Activated naive CD4-positive, alpha-beta T cell treated with anti-CD3 and anti-CD28 coated beads for 36 hours (primary cell): ENCODE measurements at regions of chr18 and their contacts with region 1.

Region 1: GRCh38 chr18:58649966-58650816 is 21.1 kb upstream of the MALT1 start:
- DNase-seq: peak; percentile 78
- H3K4me3 Mint-ChIP-seq: no peak overlapping the region
- H3K27ac Mint-ChIP-seq: no peak overlapping the region
- H3K4me1 Mint-ChIP-seq: peaks cover 59% of the 10 kb centered on the region
- H3K27me3 Mint-ChIP-seq: no peaks in the 10 kb centered on the region

Region 2: GRCh38 chr18:58552057-58552461 is 98.1 kb before region 1 on chr18:
- CTCF ChIA-PET with region 1: no interaction called
- intact Hi-C with region 1: loop called (anchors 1 kb)
- DNase-seq: peak; percentile 73
- H3K4me3 Mint-ChIP-seq: no peak overlapping the region
- H3K27ac Mint-ChIP-seq: peak overlapping the region; percentile 68
- H3K4me1 Mint-ChIP-seq: peaks cover 51% of the 10 kb centered on the region
- H3K27me3 Mint-ChIP-seq: no peaks in the 10 kb centered on the region

Region 3: GRCh38 chr18:58605027-58606020 is 44.9 kb before region 1 on chr18:
- CTCF ChIA-PET with region 1: no interaction called
- intact Hi-C with region 1: loop called (anchors 1 kb)
- DNase-seq: peak; percentile 84
- H3K4me3 Mint-ChIP-seq: no peak overlapping the region
- H3K27ac Mint-ChIP-seq: no peak overlapping the region
- H3K4me1 Mint-ChIP-seq: peaks cover 60% of the 10 kb centered on the region
- H3K27me3 Mint-ChIP-seq: no peaks in the 10 kb centered on the region

Region 4: GRCh38 chr18:58624011-58624410 is 26.2 kb before region 1 on chr18:
- CTCF ChIA-PET with region 1: no interaction called
- intact Hi-C with region 1: loop called (anchors 1 kb)
- DNase-seq: no peak
- H3K4me3 Mint-ChIP-seq: no peak overlapping the region
- H3K27ac Mint-ChIP-seq: no peak overlapping the region
- H3K4me1 Mint-ChIP-seq: peaks cover 25% of the 10 kb centered on the region
- H3K27me3 Mint-ChIP-seq: no peaks in the 10 kb centered on the region

Region 5: DNA sequence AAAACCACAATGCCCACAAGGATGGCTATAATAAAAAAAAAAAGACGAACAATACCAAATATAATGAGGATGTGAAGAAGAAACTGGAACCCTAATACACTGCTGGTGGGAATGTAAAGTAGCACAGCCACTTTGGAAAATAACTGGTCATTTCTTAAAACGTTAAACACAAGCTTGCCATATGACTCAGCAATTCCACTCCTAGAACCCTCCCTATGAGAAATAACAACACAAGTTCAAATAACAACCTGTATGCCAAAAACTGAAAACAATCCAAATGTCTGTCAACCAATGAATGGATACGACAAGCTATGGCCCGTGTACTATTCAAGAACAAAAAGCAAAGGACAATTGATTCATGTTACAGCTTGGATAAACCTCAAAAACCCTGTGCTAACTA is 14.3 kb before region 1 on chr18:
- CTCF ChIA-PET with region 1: interaction called, 3 read pairs
- intact Hi-C with region 1: loop called (anchors 1 kb)
- DNase-seq: no peak
- H3K4me3 Mint-ChIP-seq: no peak overlapping the region
- H3K27ac Mint-ChIP-seq: no peak overlapping the region
- H3K4me1 Mint-ChIP-seq: peaks cover 42% of the 10 kb centered on the region
- H3K27me3 Mint-ChIP-seq: no peaks in the 10 kb centered on the region

Region 6: GRCh38 chr18:58687871-58688308 is 37.7 kb after region 1 on chr18:
- CTCF ChIA-PET with region 1: no interaction called
- intact Hi-C with region 1: loop called (anchors 1 kb)
- DNase-seq: peak; percentile 64
- H3K4me3 Mint-ChIP-seq: peak overlapping the region; percentile 70
- H3K27ac Mint-ChIP-seq: peak overlapping the region; percentile 87
- H3K4me1 Mint-ChIP-seq: peaks cover 78% of the 10 kb centered on the region
- H3K27me3 Mint-ChIP-seq: no peaks in the 10 kb centered on the region

Region 7: DNA sequence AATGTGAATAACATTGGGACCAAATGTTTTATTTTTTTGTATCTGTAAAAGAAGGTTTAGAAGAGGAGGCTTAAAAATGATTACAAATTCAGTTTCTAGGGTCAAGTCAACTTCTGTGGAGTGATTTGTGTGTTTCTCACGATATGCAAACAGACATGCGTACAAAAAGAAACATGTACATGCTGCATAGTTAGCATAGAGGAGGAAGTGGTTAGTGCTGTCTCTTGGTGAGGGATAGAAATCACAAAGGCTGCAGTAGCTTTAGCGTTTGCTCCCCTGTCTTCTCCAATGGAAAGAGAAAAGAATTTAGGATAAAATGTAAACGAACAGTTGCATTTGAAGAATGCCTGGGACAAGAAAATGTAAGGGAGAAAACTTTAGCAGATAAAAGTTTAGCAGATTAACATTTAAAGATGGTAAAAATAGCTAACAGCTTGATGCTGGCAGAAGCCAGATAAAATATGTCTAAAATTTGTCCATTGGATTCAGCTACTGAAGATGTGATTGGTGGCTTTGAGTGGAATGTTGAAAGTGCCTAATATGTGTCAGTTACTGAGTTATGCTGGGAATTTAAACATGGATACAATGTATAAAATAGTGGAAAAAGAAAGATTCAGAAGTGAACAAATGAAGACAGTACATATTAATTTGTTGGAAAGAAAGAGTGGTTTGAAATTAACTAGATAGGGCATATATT is 66.0 kb after region 1 on chr18:
- CTCF ChIA-PET with region 1: no interaction called
- intact Hi-C with region 1: no loop called
- DNase-seq: no peak
- H3K4me3 Mint-ChIP-seq: no peak overlapping the region
- H3K27ac Mint-ChIP-seq: peak overlapping the region; percentile 43
- H3K4me1 Mint-ChIP-seq: peaks cover 54% of the 10 kb centered on the region
- H3K27me3 Mint-ChIP-seq: no peaks in the 10 kb centered on the region

Region 8: GRCh38 chr18:59052965-59053820 is 403.0 kb after region 1 on chr18:
- CTCF ChIA-PET with region 1: no interaction called
- intact Hi-C with region 1: no loop called
- DNase-seq: no peak
- H3K4me3 Mint-ChIP-seq: no peak overlapping the region
- H3K27ac Mint-ChIP-seq: no peak overlapping the region
- H3K4me1 Mint-ChIP-seq: no peaks in the 10 kb centered on the region
- H3K27me3 Mint-ChIP-seq: peaks cover 4% of the 10 kb centered on the region